ENCODE measurements at regions of chr1 and their contacts with region 1.

Region 1: DNA sequence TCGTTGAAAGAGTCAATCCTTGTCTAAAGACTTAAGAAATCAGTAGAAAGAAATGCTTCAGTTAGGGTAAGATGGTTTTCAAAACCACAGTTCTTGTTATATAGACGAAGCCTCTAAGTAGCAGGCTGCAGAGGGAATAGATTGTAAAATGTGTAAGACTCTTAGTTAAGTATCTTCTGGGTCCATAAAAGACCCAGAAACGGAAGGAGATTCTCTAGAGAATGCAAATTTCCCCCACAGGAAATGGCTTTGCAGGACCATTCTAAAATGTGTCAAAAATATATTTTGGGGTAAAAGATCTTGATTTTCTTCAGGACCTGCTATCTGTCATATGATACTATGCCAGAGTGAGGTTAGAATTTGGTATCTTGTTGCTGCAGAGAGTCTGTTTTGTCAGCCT is 13.4 kb downstream of the OR2T1 start:
- DNase-seq: no peak
- ATAC-seq: no peak
- H3K4me3 Mint-ChIP-seq: no peak overlapping the region
- H3K27ac Mint-ChIP-seq: no peak overlapping the region
- H3K4me1 Mint-ChIP-seq: peaks cover 11% of the 10 kb centered on the region
- H3K27me3 Mint-ChIP-seq: no peaks in the 10 kb centered on the region
- CTCF ChIP-seq: no peak

Region 2: GRCh38 chr1:248404024-248404423 is 12.2 kb before region 1 on chr1:
- CTCF ChIA-PET with region 1: no interaction called
- POLR2A ChIA-PET with region 1: no interaction called
- intact Hi-C with region 1: no loop called
- DNase-seq: no peak
- ATAC-seq: no peak
- H3K4me3 Mint-ChIP-seq: no peak overlapping the region
- H3K27ac Mint-ChIP-seq: peak overlapping the region; percentile 0
- H3K4me1 Mint-ChIP-seq: no peaks in the 10 kb centered on the region
- H3K27me3 Mint-ChIP-seq: no peaks in the 10 kb centered on the region
- CTCF ChIP-seq: no peak

Region 3: DNA sequence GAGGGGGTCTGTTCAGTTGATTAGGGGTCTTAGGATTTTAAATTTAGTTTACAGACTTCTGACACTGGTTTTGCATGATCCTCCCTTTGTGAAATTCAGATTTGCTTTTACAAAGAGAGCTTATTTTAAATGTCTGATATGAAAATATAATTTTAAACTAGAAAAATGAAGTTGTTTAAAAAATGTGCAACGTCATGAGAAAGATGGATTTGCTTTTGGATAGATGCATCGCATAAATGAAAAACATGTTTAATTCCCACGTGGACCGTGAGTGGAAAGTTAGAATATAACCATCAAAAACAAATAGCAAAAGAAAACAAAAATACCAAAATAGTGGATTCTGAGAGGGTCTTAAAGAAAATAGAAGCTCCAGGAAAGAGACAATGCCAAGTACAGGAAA is 54.9 kb after region 1 on chr1:
- CTCF ChIA-PET with region 1: no interaction called
- POLR2A ChIA-PET with region 1: no interaction called
- intact Hi-C with region 1: loop called (anchors 10 kb)
- DNase-seq: no peak
- ATAC-seq: no peak
- H3K4me3 Mint-ChIP-seq: no peak overlapping the region
- H3K27ac Mint-ChIP-seq: no peak overlapping the region
- H3K4me1 Mint-ChIP-seq: no peaks in the 10 kb centered on the region
- H3K27me3 Mint-ChIP-seq: no peaks in the 10 kb centered on the region
- CTCF ChIP-seq: no peak

Measured in activated B cell treated with CpG ODN at 0.5 μM for 24 hours (primary cell).